Astrocyte of the cerebellum (primary cell): ENCODE measurements at regions of chr12 and their contacts with region 1.

Region 1: GRCh38 chr12:47910486-47910885 is 5.7 kb upstream of the VDR start:
- DNase-seq: no peak
- H3K4me3 ChIP-seq: no peak overlapping the region
- CTCF ChIP-seq: no peak

Region 2: GRCh38 chr12:47963340-47964040 is 53.0 kb after region 1 on chr12 and contains the start of gene TMEM106C:
- in situ Hi-C with region 1: loop called (anchors 10 kb)
- DNase-seq: peak; percentile 70
- H3K4me3 ChIP-seq: peak within 1 kb of the TSS; percentile 96
- CTCF ChIP-seq: peak; percentile 99